AG04449 (cell line): ENCODE measurements at regions of chr5 and their contacts with region 1.

Region 1: DNA sequence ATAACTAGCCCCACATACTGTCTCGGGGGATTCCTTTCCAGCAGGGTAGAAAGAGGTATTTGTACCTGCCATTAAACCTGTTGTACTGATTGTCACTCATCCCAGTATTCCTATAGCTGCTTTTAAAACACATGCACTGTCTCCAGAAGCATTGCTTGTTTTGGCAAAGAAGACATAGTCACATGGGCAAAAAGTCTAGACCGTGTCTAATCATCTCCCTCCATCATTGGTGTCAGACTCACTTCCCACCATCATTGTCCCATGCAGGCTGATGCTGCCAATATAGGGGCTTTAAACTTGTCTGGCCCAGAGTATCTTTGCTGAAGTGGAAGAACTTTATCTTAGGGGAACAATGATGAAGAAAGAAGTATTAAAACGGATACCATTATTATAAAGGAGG is 12.6 kb downstream of the DNAJC21 start:
- DNase-seq: no peak
- H3K4me3 ChIP-seq: no peak overlapping the region
- CTCF ChIP-seq: no peak

Region 2: DNA sequence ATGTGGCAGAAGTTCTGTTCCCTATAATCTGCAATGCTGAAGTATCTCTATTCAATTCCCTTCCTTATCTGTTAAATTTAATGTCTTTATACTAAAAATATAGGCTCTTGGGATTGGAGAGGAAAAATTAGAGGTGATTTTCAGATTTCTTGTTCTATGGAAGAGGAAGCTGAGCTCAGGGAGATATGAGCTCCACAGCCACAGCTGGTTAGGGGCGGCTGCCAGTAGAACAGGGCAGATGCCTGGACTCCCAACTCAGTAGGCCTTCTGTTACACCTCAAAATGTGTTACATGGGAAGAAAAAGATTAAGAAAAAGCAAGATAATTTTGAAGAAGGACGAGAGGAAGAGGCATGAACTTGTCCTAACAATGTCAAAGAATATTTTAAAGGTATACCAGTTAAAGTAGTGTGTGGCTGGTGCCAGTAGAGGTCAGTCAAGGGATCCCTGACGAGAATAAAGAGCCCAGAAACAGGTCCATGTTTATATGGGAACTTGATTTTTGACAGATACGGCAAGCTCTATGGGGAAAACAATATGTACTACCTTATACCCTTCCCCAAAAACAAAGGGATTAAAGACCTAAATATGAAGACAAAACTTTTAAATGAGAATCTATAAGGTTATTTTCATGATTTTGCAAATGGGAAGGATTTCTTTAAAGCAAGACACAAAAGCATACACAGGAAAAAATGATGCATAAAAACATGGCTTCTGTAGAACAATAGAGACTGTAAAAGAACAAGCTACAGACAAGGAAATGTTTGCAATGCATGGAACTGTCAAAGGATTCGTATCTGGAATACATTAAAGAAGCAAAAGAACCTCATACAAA is 16.1 kb after region 1 on chr5:
- CTCF ChIA-PET with region 1: interaction called, 17 read pairs
- POLR2A ChIA-PET with region 1: no interaction called
- DNase-seq: no peak
- H3K4me3 ChIP-seq: no peak overlapping the region
- CTCF ChIP-seq: peak; percentile 54

Region 3: GRCh38 chr5:34970552-34970951 is 28.6 kb after region 1 on chr5:
- CTCF ChIA-PET with region 1: no interaction called
- POLR2A ChIA-PET with region 1: no interaction called
- DNase-seq: no peak
- H3K4me3 ChIP-seq: no peak overlapping the region
- CTCF ChIP-seq: no peak